GM18951 (cell line): ENCODE measurements at regions of chr20 and their contacts with region 1.

Region 1: GRCh38 chr20:354298-355064 is 7.6 kb downstream of the NRSN2 start:
- POLR2A ChIP-seq: no peak

Region 2: GRCh38 chr20:478949-479429 is 124.5 kb after region 1 on chr20:
- in situ Hi-C with region 1: loop called (anchors 10 kb)
- POLR2A ChIP-seq: no peak

Region 3: GRCh38 chr20:645318-646106 is 291.0 kb after region 1 on chr20:
- in situ Hi-C with region 1: loop called (anchors 5 kb)
- POLR2A ChIP-seq: no peak